ENCODE measurements at regions of chr5 and their contacts with region 1.

Region 1: GRCh38 chr5:53882676-53883031 is 322.2 kb downstream of the NDUFS4 start:
- DNase-seq: no peak
- ATAC-seq: no peak
- H3K4me3 ChIP-seq: no peak overlapping the region
- H3K27ac ChIP-seq: no peak overlapping the region
- H3K4me1 ChIP-seq: no peaks in the 10 kb centered on the region
- H3K27me3 ChIP-seq: no peaks in the 10 kb centered on the region; the same call in 1 of the 2 replicates
- CTCF ChIP-seq: no peak

Region 2: DNA sequence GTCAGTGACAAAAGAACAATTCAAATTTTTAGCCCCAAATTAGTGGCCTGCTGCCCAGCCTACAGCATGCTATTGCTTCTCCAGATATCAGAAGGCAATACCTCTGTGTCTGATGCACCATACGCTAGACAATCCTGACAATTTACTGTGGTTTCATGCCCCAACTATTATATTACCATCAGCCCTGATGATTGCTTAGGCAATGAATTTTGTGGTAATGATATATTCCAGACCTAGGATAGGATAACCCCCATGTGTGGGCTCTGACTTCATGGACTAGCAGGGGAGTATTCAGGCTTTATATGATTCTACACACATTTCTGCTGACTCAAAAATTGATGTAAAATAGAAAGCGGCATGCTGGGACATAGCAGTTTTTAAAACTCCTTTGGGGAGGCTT is 571.0 kb before region 1 on chr5:
- CTCF ChIA-PET with region 1: no interaction called
- POLR2A ChIA-PET with region 1: no interaction called
- in situ Hi-C with region 1: no loop called
- intact Hi-C with region 1: no loop called
- DNase-seq: no peak
- ATAC-seq: no peak
- H3K4me3 ChIP-seq: no peak overlapping the region
- H3K27ac ChIP-seq: no peak overlapping the region
- H3K4me1 ChIP-seq: no peaks in the 10 kb centered on the region
- H3K27me3 ChIP-seq: no peaks in the 10 kb centered on the region
- CTCF ChIP-seq: no peak

Region 3: DNA sequence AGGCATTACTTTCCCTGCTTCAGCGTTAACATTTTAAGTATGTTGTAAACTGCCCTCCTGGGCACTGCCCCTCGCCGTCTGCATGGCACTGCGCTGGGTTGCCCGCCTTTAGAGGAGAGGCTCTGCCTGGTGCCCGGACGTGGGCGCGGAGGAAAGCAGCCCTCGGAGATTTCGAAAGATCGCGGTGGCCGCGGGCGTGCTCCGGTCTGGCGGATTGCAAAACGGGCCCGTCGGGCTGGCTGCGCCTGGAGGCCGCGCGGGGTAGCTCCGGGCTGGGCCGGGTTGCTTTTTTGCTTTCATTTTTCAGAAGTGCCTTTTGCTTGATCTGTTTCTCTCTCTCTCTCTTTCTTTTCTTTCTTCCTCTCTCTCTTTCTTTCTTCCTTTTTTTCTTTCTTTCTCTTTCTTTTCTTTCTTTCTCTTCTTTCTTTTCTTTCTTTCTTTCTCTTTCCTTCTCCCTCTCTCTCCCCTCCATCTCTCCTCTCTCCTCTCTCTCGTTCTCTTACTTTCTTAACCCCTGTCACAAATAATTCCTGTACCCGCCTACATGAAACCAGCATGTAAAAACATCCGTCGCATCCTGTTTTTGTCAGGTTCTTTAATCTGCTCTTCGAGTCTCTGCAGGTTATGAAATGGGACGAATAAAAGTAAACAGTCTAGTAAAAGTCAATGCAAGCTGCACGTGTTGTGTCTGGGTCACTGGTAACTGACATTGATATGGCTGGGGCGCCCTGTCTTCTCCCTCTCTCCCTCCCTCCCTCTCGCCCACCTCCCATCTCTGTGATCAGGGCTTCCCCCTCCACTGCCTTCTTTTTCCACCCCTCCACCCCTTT is 400.6 kb before region 1 on chr5:
- CTCF ChIA-PET with region 1: no interaction called
- POLR2A ChIA-PET with region 1: no interaction called
- in situ Hi-C with region 1: no loop called
- intact Hi-C with region 1: loop called (anchors 10 kb)
- DNase-seq: no peak
- ATAC-seq: peak; percentile 59
- H3K4me3 ChIP-seq: peak overlapping the region; percentile 53 to 62
- H3K27ac ChIP-seq: no peak overlapping the region
- H3K4me1 ChIP-seq: peaks cover 12% of the 10 kb centered on the region
- H3K27me3 ChIP-seq: peaks cover 46% of the 10 kb centered on the region
- CTCF ChIP-seq: no peak

Region 4: GRCh38 chr5:53603009-53603687 is 279.5 kb before region 1 on chr5:
- CTCF ChIA-PET with region 1: no interaction called
- POLR2A ChIA-PET with region 1: no interaction called
- in situ Hi-C with region 1: no loop called
- intact Hi-C with region 1: no loop called
- DNase-seq: no peak
- ATAC-seq: no peak
- H3K4me3 ChIP-seq: no peak overlapping the region
- H3K27ac ChIP-seq: no peak overlapping the region
- H3K4me1 ChIP-seq: peaks cover 6% of the 10 kb centered on the region
- H3K27me3 ChIP-seq: no peaks in the 10 kb centered on the region
- CTCF ChIP-seq: no peak

Measured in Panc1 (cell line).